MCF 10A (cell line): ENCODE measurements at regions of chr9 and their contacts with region 1.

Region 1: DNA sequence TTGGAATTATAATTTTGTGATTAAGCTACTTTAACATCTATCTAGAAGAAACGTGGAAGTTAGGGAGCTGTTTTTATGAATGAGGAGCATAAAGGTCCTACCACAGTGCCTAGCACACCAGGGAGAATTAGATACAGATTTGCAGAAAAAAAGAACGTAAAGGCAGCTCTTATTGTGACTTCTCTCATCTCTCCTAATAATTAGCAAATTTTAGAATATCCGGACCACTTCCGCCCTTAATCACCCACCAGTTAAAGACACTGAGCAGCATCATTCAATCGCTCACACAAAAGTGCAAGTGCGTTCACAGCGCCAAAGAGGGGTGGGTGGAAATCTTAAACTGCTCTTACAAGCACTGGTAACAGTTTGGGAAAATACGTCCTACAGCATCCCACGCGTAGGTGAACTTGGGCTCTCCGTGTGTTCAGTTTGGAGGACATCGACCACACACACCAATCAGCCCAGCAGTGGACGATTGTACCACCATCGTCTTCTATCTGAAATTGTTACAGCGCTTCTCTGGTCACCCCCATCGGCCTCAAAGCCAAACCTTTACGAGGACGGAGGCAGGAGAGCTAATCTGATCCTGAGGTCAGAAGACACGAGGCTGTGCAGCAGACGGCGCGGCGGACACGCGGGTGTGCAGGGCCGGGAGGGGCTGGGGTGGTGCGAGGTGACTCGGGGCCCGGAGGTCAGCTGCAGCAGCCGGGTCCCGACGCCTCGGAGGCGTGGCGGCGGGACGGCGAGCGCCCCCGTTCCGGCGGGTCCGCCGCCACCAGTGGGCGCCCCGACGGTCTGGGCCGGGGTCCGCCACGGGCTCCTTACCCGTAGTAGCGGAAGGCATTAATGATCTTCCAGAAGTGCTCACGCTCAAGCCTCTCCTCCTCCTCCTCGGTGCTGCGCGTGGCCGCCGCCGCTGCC is 646 bp downstream of the CARNMT1 start:
- DNase-seq: peak; percentile 50
- H3K4me3 Mint-ChIP-seq: peak overlapping the region; percentile 95
- H3K27ac Mint-ChIP-seq: peak overlapping the region; percentile 21
- H3K4me1 Mint-ChIP-seq: peaks cover 12% of the 10 kb centered on the region
- H3K27me3 Mint-ChIP-seq: no peaks in the 10 kb centered on the region
- CTCF ChIP-seq: no peak

Region 2: DNA sequence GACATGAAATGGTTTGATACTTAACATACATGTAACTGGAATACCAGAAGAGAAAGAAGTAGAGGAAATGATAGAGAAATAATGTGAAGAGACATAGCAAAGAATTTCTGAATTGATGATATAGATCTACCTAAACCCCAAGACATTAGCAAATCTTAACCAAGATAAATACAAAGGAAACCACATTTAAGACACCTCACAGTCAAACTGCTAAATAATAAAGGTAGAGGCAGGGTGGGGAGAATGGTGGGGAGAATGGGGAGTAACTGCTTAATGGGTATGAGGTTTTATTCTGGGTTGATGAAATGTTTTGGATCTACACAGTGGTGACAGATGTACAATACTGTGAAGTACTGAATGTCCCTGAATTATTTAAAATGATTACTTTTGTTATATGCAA is 16.9 kb before region 1 on chr9:
- CTCF ChIA-PET with region 1: interaction called, 14 read pairs
- POLR2A ChIA-PET with region 1: interaction called, 18 read pairs
- intact Hi-C with region 1: no loop called
- DNase-seq: no peak
- H3K4me3 Mint-ChIP-seq: no peak overlapping the region
- H3K27ac Mint-ChIP-seq: peak overlapping the region; percentile 47
- H3K4me1 Mint-ChIP-seq: peaks cover 5% of the 10 kb centered on the region
- H3K27me3 Mint-ChIP-seq: no peaks in the 10 kb centered on the region
- CTCF ChIP-seq: no peak

Region 3: GRCh38 chr9:75017378-75017777 is 10.1 kb before region 1 on chr9:
- CTCF ChIA-PET with region 1: interaction called, 14 read pairs
- POLR2A ChIA-PET with region 1: interaction called, 18 read pairs
- intact Hi-C with region 1: no loop called
- DNase-seq: no peak
- H3K4me3 Mint-ChIP-seq: no peak overlapping the region
- H3K27ac Mint-ChIP-seq: peak overlapping the region; percentile 10
- H3K4me1 Mint-ChIP-seq: peaks cover 7% of the 10 kb centered on the region
- H3K27me3 Mint-ChIP-seq: no peaks in the 10 kb centered on the region
- CTCF ChIP-seq: no peak

Region 4: DNA sequence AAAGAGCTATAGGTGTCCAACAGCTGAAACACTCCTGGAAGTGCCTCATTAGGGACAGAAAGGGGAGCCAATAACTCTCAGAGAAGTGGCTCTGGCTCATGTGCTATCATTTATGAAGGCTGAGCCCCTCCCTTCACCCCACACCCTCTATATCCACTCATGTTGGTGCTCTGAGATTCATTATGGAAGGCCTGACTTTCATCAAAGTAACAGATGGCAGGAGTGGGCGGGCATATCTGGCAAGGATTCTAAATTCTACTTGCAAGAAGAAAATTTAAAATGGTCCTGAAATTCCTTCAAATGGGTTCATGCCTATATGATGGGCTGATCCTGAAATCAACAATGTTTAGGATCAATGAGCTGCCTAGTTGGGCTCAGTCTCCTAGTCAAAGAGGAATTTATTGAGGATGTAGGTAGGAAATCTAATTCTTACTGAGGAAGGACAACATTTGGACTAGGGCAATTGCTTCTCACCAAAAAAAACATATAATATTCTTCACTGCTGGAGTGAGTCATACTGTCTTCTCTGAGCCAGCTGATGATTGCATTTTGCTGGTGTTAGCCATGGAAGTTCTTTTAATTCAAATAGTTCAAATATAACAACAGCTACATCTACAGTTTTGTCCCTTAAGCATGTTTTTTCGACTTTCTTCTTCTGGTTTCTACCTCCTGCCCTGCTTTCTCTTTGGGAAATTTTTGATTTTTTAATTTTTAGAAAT is 37.0 kb after region 1 on chr9:
- CTCF ChIA-PET with region 1: interaction called, 39 read pairs
- POLR2A ChIA-PET with region 1: interaction called, 4 read pairs
- intact Hi-C with region 1: no loop called
- DNase-seq: no peak
- H3K4me3 Mint-ChIP-seq: no peak overlapping the region
- H3K27ac Mint-ChIP-seq: peak overlapping the region; percentile 49
- H3K4me1 Mint-ChIP-seq: no peaks in the 10 kb centered on the region
- H3K27me3 Mint-ChIP-seq: no peaks in the 10 kb centered on the region
- CTCF ChIP-seq: no peak

Region 5: DNA sequence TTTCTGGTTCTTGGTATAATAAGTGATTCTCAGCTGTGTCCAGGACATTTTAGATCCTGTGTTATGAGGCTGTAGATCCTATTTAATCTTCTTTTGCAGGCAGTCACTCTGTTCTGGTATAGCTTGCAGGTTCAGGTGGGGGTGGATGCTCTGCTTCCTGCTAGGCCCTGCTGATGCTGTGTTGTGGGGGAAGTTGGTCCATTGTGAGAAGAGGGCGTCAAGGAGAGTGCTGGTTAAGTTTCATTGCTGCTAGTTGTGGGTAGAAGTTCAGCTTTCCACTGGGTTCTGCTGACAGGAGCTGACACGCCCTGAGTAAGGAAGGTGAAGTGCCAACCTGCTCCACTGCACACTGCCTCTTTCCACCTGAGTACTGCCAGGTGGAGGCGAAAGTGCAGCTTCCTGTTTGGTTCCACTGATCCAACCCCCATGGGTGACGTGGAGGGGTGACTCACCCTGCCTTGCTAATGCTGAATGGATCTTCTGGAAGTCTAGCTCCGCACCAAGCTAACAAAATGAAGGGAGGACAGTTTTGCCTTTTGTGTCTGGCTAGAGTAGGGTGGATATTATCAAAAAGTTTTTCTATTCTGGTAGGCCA is 44.2 kb after region 1 on chr9:
- CTCF ChIA-PET with region 1: interaction called, 39 read pairs
- POLR2A ChIA-PET with region 1: interaction called, 12 read pairs
- intact Hi-C with region 1: no loop called
- DNase-seq: peak; percentile 81
- H3K4me3 Mint-ChIP-seq: no peak overlapping the region
- H3K27ac Mint-ChIP-seq: peak overlapping the region; percentile 77
- H3K4me1 Mint-ChIP-seq: peaks cover 13% of the 10 kb centered on the region
- H3K27me3 Mint-ChIP-seq: no peaks in the 10 kb centered on the region
- CTCF ChIP-seq: no peak